Caco-2 (cell line): ENCODE measurements at regions of chr6 and their contacts with region 1.

Region 1: DNA sequence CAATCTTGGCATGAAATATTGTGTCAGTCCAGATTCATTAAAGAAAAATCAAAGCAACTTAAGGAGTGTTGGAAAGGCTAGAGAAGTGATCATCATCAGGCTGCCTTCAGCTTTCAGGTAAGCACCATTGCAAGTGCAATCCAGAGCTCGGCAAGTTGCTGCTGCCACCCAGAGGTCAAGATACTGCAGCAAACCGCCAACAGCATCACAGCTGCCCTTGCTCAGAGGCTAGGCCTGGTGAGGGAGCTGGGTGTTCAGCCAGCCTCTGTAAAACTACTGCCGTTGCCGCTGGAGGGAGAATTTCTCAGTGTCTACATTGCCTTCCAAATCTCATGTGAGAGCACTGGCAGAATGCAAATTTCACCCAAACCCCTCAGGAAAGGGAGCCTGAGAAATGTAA is 5.8 kb upstream of the SYNE1 start:
- DNase-seq: peak; percentile 75 to 78
- H3K4me3 ChIP-seq: no peak overlapping the region
- H3K4me3 Mint-ChIP-seq: no peak overlapping the region
- H3K27ac Mint-ChIP-seq: no peak overlapping the region
- H3K4me1 ChIP-seq: no peaks in the 10 kb centered on the region
- H3K4me1 Mint-ChIP-seq: no peaks in the 10 kb centered on the region
- H3K27me3 ChIP-seq: no peaks in the 10 kb centered on the region
- H3K27me3 Mint-ChIP-seq: peaks cover 27% of the 10 kb centered on the region
- CTCF ChIP-seq: peak; percentile 55 to 79

Region 2: GRCh38 chr6:151629791-151630190 is 1013.2 kb before region 1 on chr6:
- CTCF ChIA-PET with region 1: no interaction called
- POLR2A ChIA-PET with region 1: no interaction called
- intact Hi-C with region 1: no loop called
- DNase-seq: no peak
- H3K4me3 ChIP-seq: no peak overlapping the region
- H3K4me3 Mint-ChIP-seq: no peak overlapping the region
- H3K27ac Mint-ChIP-seq: no peak overlapping the region
- H3K4me1 ChIP-seq: peaks cover 27% of the 10 kb centered on the region
- H3K4me1 Mint-ChIP-seq: peaks cover 36% of the 10 kb centered on the region
- H3K27me3 ChIP-seq: no peaks in the 10 kb centered on the region
- H3K27me3 Mint-ChIP-seq: no peaks in the 10 kb centered on the region
- CTCF ChIP-seq: no peak

Region 3: DNA sequence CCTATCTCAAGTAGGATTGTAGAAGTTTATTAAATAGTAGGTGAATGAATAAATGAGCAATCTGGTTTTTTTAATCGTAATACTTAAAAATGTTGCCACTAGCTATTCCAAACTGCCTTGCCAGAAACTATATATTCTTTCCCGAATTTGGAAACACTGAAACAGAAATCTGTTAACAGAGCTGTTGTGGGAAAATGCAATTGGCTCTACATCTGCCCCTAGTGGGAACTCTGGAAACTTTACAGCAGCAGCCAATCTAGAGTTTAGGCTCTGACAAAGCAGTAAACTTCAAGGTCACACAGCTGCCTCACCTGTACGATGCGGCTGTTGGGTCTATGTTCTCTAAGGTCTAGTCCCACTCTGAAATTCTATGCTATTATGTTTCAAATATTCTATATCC is 47.5 kb before region 1 on chr6:
- CTCF ChIA-PET with region 1: no interaction called
- POLR2A ChIA-PET with region 1: no interaction called
- intact Hi-C with region 1: loop called (anchors 1 kb)
- DNase-seq: peak in 1 of 2 experiments; percentile 25
- H3K4me3 ChIP-seq: no peak overlapping the region
- H3K4me3 Mint-ChIP-seq: peak overlapping the region; percentile 61
- H3K27ac Mint-ChIP-seq: peak overlapping the region; percentile 97
- H3K4me1 ChIP-seq: peaks cover 46% of the 10 kb centered on the region
- H3K4me1 Mint-ChIP-seq: peaks cover 31% of the 10 kb centered on the region
- H3K27me3 ChIP-seq: no peaks in the 10 kb centered on the region
- H3K27me3 Mint-ChIP-seq: no peaks in the 10 kb centered on the region
- CTCF ChIP-seq: peak; percentile 43 to 45

Region 4: DNA sequence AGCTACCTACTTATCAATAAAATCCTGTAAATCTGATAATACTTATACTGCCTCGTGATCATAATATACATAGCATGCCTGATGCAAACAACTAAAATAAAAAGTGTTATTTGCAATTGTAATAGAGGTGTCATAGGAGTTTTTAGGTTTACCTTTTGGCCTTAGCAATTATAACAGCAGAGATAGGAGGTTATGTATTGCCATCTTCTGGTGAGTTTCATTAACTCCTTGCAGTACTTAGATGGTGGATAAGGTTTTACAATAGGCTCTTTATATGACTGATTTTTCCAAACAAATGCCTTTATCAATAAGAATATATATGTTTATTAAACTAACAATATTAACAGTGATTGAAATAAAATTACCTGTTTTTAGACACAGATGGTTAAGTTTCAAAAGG is 26.9 kb after region 1 on chr6:
- CTCF ChIA-PET with region 1: interaction called, 4 read pairs
- POLR2A ChIA-PET with region 1: no interaction called
- intact Hi-C with region 1: loop called (anchors 1 kb)
- DNase-seq: peak in 1 of 2 experiments; percentile 5
- H3K4me3 ChIP-seq: no peak overlapping the region
- H3K4me3 Mint-ChIP-seq: no peak overlapping the region
- H3K27ac Mint-ChIP-seq: no peak overlapping the region
- H3K4me1 ChIP-seq: no peaks in the 10 kb centered on the region
- H3K4me1 Mint-ChIP-seq: no peaks in the 10 kb centered on the region
- H3K27me3 ChIP-seq: no peaks in the 10 kb centered on the region
- H3K27me3 Mint-ChIP-seq: peaks cover 13% of the 10 kb centered on the region
- CTCF ChIP-seq: peak in 1 of 2 experiments; percentile 36

Region 5: GRCh38 chr6:152736687-152737273 is 93.8 kb after region 1 on chr6:
- CTCF ChIA-PET with region 1: no interaction called
- POLR2A ChIA-PET with region 1: no interaction called
- intact Hi-C with region 1: no loop called
- DNase-seq: no peak
- H3K4me3 ChIP-seq: no peak overlapping the region
- H3K4me3 Mint-ChIP-seq: no peak overlapping the region
- H3K27ac Mint-ChIP-seq: no peak overlapping the region
- H3K4me1 ChIP-seq: no peaks in the 10 kb centered on the region
- H3K4me1 Mint-ChIP-seq: no peaks in the 10 kb centered on the region
- H3K27me3 ChIP-seq: no peaks in the 10 kb centered on the region
- H3K27me3 Mint-ChIP-seq: no peaks in the 10 kb centered on the region
- CTCF ChIP-seq: no peak

Region 6: DNA sequence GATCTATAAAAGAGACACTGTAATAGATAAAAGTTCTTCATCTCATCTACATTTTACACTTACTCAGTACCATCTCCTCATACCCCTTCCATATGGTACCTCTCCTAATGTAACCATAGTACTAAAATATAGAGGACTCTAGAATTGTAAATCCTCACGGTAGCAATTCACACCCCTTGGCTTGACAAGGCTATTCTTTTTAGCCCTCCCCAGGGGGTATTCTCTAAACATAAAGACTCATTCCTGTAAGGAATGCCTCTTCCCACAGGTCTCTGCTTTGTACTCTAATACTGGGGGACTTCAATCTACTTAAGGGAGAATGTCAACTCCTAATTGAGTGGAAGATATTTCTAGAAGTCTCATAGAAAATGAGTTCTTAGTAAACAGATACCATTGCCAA is 193.5 kb after region 1 on chr6:
- CTCF ChIA-PET with region 1: no interaction called
- POLR2A ChIA-PET with region 1: no interaction called
- intact Hi-C with region 1: no loop called
- DNase-seq: no peak
- H3K4me3 ChIP-seq: no peak overlapping the region
- H3K4me3 Mint-ChIP-seq: no peak overlapping the region
- H3K27ac Mint-ChIP-seq: no peak overlapping the region
- H3K4me1 ChIP-seq: no peaks in the 10 kb centered on the region
- H3K4me1 Mint-ChIP-seq: no peaks in the 10 kb centered on the region
- H3K27me3 ChIP-seq: no peaks in the 10 kb centered on the region
- H3K27me3 Mint-ChIP-seq: peaks cover 7% of the 10 kb centered on the region
- CTCF ChIP-seq: no peak